Posterior vena cava (tissue), 2 donors: ENCODE measurements at regions of chr22 and their contacts with region 1.

Region 1: GRCh38 chr22:37428649-37429586 is 1.6 kb upstream of the ELFN2 start:
- DNase-seq: no peak

Region 2: GRCh38 chr22:37343863-37344734 is 84.8 kb before region 1 on chr22:
- intact Hi-C with region 1: loop called in 1 of 2 experiments (anchors 1 kb)
- DNase-seq: no peak

Region 3: GRCh38 chr22:37462983-37463382 is 34.1 kb after region 1 on chr22:
- intact Hi-C with region 1: loop called in 1 of 2 experiments (anchors 1 kb)
- DNase-seq: no peak